ENCODE measurements at regions of chr11 and their contacts with region 1.

Region 1: DNA sequence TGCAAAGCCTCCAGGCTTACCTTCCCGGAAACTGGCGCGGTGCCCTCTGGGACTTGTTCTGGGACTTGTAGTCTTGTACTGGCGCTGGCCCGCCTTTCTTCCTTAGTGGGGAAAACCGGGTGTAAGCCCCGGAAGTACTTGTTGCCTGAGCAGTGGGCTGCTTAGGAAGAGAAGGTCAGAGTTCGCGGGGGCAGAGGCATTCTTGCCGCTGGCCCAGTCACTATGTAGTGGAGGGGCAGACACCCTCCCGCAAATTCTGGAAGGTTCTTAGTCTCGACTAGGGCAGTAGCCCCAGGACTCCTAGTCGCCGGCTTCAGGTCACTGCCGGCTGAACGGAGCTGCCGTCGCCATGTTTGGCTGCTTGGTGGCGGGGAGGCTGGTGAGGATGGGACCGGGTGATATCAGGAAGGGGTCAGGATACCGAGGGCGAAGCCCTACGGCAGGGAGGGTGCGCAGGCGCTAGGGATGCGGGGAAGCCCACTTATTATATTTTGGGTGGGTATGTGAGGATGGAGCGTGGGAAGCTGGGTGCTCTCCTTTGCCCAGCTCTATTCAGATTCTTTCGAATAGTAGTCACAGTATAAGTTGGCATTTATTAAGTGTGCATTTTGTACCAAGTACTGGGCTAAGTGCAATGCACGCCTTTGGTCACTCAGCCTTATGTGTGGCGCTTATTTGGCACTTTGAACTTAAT is at the start of gene HIKESHI:
- DNase-seq: peak; percentile 91
- ATAC-seq: peak; percentile 99
- H3K4me3 Mint-ChIP-seq: peak within 1 kb of the TSS; percentile 99
- H3K27ac Mint-ChIP-seq: peak within 1 kb of the TSS; percentile 93
- H3K4me1 Mint-ChIP-seq: peaks cover 26% of the 10 kb centered on the region
- H3K27me3 Mint-ChIP-seq: no peaks in the 10 kb centered on the region
- total RNA-seq, gene HIKESHI: 45.3 to 49.9 TPM

Region 2: GRCh38 chr11:86099874-86100273 is 202.4 kb before region 1 on chr11:
- CTCF ChIA-PET with region 1: no interaction called
- POLR2A ChIA-PET with region 1: no interaction called
- DNase-seq: no peak
- ATAC-seq: no peak
- H3K4me3 Mint-ChIP-seq: no peak overlapping the region
- H3K27ac Mint-ChIP-seq: no peak overlapping the region
- H3K4me1 Mint-ChIP-seq: no peaks in the 10 kb centered on the region
- H3K27me3 Mint-ChIP-seq: peaks cover 2% of the 10 kb centered on the region

Region 3: DNA sequence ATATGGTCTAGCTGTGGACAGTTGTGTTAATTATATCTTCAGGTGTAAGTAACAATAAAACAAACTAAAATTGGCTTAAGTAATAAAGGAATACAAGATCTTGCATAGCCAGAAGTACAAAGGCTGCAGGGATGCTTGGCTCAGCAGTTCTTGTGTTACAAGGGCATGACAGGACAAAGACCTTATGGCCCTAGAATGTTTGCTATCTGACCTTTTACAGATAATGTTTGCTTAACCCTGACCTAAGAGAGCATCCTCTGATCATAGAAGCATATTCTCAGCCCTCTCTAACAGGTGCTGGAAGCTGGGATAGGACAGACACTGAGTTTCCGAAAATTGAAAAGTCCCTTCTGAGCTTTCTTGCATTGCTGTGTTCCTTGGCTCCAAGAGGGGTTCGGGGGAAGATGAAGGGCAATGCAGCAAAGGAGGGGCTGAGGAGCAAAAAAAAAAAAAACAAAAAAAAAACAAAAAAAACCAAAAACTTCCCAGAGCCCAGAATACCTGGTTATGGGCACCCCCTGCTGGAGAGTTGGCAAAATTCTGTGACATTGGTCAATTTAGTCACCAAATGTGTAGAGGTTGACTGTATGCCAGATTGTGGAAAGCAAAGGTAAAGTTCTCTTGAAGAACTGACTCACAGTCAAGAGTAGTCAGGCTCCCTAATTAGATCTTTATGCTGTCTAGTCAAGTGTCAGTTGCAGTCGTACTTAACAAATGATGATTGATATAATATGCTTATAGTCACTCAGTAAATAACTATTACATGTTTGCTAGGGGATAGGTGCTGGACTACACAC is 10.6 kb before region 1 on chr11:
- CTCF ChIA-PET with region 1: interaction called, 13 read pairs
- POLR2A ChIA-PET with region 1: interaction called, 4 read pairs
- DNase-seq: peak; percentile 71
- ATAC-seq: peak; percentile 48
- H3K4me3 Mint-ChIP-seq: no peak overlapping the region
- H3K27ac Mint-ChIP-seq: no peak overlapping the region
- H3K4me1 Mint-ChIP-seq: peaks cover 44% of the 10 kb centered on the region
- H3K27me3 Mint-ChIP-seq: peaks cover 4% of the 10 kb centered on the region

Region 4: GRCh38 chr11:86615487-86615886 is 313.2 kb after region 1 on chr11:
- CTCF ChIA-PET with region 1: no interaction called
- POLR2A ChIA-PET with region 1: no interaction called
- DNase-seq: no peak
- ATAC-seq: no peak
- H3K4me3 Mint-ChIP-seq: no peak overlapping the region
- H3K27ac Mint-ChIP-seq: no peak overlapping the region
- H3K4me1 Mint-ChIP-seq: no peaks in the 10 kb centered on the region
- H3K27me3 Mint-ChIP-seq: peaks cover 7% of the 10 kb centered on the region

Measured in activated CD8-positive, alpha-beta T cell treated with anti-CD3 and anti-CD28 coated beads, Interleukin-2, amount 10 ng/mL, durations not matched to agents 7 days and 5 days (primary cell).